Heart left ventricle (tissue), 16 donors: ENCODE measurements at regions of chr7 and their contacts with region 1.

Region 1: GRCh38 chr7:7535691-7536090 is at the start of gene COL28A1:
- DNase-seq: peak in 1 of 5 donors; percentile 34
- ATAC-seq: no peak
- H3K4me3 ChIP-seq: peak within 1 kb of the TSS in 4 of 12 donors; percentile 6 to 20 (median 8)
- H3K27ac ChIP-seq: no peak within 1 kb of the TSS
- H3K4me1 ChIP-seq: peaks cover 0 to 4% (median 0%) of the 10 kb centered on the region in 12 donors
- H3K27me3 ChIP-seq: no peaks in the 10 kb centered on the region
- CTCF ChIP-seq: no peak
- POLR2A ChIP-seq: no peak
- total RNA-seq, gene COL28A1: 0.29 to 4.4 (median 1.2) TPM

Region 2: GRCh38 chr7:7109934-7110333 is 425.8 kb before region 1 on chr7:
- intact Hi-C with region 1: loop called in 1 of 10 experiments (anchors 5 kb)
- DNase-seq: no peak
- ATAC-seq: no peak
- H3K4me3 ChIP-seq: no peak overlapping the region
- H3K27ac ChIP-seq: no peak overlapping the region
- H3K4me1 ChIP-seq: peaks cover 0 to 3% (median 0%) of the 10 kb centered on the region in 12 donors
- H3K27me3 ChIP-seq: no peaks in the 10 kb centered on the region
- CTCF ChIP-seq: no peak
- POLR2A ChIP-seq: no peak

Region 3: GRCh38 chr7:7424151-7424873 is 111.4 kb before region 1 on chr7:
- intact Hi-C with region 1: loop called (anchors 2 to 5 kb)
- DNase-seq: peak; percentile 41 to 58 (median 55)
- ATAC-seq: peak; percentile 58 to 94 (median 86)
- H3K4me3 ChIP-seq: peak overlapping the region; percentile 14 to 65 (median 50)
- H3K27ac ChIP-seq: peak overlapping the region in 1 of 12 donors; percentile 11
- H3K4me1 ChIP-seq: peaks cover 0 to 11% (median 0%) of the 10 kb centered on the region in 12 donors
- H3K27me3 ChIP-seq: no peaks in the 10 kb centered on the region
- CTCF ChIP-seq: peak; percentile 52 to 82 (median 70)
- POLR2A ChIP-seq: no peak

Region 4: DNA sequence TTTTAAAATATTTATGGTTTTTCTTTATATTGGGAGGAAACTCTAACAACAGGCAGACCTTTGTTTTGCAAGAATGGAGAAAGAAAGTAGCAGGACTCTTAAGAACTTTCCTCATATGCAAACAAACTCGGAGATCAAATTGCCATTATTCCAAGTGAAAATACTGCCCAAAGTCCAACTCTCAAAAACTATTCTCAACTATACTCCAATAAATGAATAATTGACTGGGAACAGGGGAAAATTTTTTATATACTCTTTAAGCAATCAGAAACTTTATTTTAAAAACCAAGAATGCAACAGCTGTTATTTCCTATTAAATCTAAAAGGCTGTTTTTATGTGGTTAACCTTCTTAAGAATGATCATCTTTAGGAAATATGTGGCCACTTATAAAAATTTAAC is 101.9 kb before region 1 on chr7:
- intact Hi-C with region 1: loop called in 5 of 10 experiments (anchors 5 kb)
- DNase-seq: no peak
- ATAC-seq: no peak
- H3K4me3 ChIP-seq: no peak overlapping the region
- H3K27ac ChIP-seq: no peak overlapping the region
- H3K4me1 ChIP-seq: peaks cover 0 to 5% (median 0%) of the 10 kb centered on the region in 12 donors
- H3K27me3 ChIP-seq: peaks cover 0 to 3% (median 0%) of the 10 kb centered on the region in 9 donors
- CTCF ChIP-seq: no peak
- POLR2A ChIP-seq: no peak